ENCODE measurements at regions of chr3 and their contacts with region 1.

Region 1: DNA sequence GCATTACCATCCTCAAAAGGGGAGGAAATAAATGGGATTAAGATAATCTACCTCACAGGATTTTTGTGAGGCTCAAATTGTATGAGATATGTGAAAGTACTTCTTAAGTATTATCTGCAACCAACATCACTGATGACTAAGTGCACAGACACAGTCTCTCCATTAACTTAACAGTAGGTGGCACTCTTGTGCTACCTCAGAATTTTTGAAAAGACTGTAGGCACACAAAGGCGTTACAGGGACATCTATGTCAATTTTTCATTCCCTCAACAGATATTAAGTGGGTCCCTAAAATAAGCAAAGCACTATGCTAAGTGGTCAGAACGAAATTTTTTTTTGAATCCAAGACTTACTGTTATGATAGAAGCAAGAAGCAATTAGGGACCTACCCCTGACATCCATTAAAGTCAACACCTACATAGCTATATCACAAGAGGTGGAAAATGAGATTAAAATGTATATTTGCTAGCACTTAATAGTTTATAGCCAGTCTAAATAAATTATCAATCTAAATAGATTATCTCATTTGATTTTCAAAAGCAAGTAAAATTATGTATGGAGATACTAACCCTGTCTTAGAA is 52.9 kb downstream of the RYK start:
- DNase-seq: no peak
- ATAC-seq: peak; percentile 64

Region 2: DNA sequence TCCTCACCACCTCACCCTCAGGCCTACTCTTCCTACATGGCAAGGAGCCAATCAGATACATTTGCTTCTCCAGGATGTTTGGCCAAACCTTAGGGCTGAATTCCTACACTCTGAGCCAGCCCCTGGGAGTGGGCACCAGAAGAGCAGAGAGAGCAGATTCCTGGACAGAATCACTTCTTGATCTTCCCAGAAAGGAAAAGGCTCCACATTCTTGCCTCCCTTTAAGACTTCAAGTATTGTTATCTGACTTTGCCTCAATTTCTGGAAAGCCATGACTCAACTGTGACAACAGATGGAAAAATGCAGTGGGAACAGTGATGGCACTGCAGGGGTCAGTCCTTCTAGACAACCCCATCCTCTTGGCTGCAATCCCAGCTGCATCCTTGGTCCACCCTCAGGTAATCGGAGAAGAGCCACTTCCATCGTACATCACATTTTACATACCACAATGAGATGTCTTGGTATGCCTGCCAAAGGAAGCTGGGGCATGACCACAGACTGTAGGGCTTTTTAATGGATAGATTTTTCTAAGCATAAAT is 189.1 kb before region 1 on chr3:
- intact Hi-C with region 1: no loop called
- DNase-seq: no peak
- ATAC-seq: no peak

Region 3: DNA sequence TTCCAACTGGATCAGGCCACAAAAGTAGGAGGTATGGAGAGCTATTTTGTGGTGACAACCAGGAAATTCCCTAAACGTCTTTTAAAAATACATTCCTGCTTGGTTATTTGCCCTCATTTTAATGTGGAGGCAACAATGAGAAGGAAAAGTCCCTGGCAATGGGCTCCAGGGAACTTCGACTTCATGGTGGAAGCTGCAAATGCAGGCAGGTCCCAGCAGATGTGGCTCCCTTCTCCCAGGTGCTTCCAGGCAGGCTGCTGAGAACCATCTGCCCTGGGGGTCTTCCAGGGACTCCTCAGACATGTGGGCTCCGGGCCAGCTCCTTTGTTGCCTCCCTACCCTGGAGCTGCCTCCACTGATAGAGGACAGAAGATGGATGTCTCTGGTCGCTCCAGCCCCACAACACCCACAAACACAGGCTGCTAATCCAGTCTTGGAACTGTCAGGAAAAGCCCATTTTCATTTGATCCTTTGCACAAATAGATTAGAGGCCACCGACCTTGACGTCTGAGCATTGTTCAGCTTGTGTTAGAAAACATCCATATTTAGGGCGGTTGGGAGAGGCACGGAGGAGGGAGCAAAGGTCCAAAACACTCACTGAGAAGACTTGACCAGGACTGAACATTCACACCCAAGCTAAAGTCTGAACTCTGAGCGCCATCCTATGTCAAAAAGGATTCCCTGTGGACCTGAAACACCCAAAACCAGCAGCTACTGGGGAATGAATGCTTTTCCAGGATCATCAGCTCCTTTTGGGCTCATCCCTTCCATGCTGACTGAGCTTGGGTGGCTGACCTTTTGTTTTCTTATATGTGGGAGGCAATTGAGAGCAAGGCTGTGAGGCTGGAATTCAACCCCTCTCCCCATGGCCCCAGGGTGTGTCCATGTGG is 137.9 kb before region 1 on chr3:
- intact Hi-C with region 1: no loop called
- DNase-seq: no peak
- ATAC-seq: peak; percentile 60

Region 4: GRCh38 chr3:134260984-134261383 is 63.2 kb after region 1 on chr3:
- intact Hi-C with region 1: no loop called
- DNase-seq: no peak
- ATAC-seq: no peak

Region 5: GRCh38 chr3:134496471-134497071 is 298.8 kb after region 1 on chr3:
- intact Hi-C with region 1: loop called in 1 of 2 experiments (anchors 10 kb)
- DNase-seq: no peak
- ATAC-seq: no peak